Activated CD4-positive, alpha-beta T cell treated with anti-CD3 and anti-CD28 coated beads, Interleukin-2, amount 10 ng/mL, durations not matched to agents 24 days and 14 days (primary cell): ENCODE measurements at regions of chr1 and their contacts with region 1.

Region 1: GRCh38 chr1:168520052-168520751 is 23.6 kb downstream of the XCL2 start:
- DNase-seq: peak; percentile 81
- H3K4me3 Mint-ChIP-seq: peak overlapping the region; percentile 79
- H3K27ac Mint-ChIP-seq: peak overlapping the region; percentile 91
- H3K4me1 Mint-ChIP-seq: peaks cover 51% of the 10 kb centered on the region
- H3K27me3 Mint-ChIP-seq: no peaks in the 10 kb centered on the region

Region 2: GRCh38 chr1:168360151-168361021 is 159.8 kb before region 1 on chr1:
- intact Hi-C with region 1: loop called (anchors 5 kb)
- DNase-seq: peak; percentile 75
- H3K4me3 Mint-ChIP-seq: peak overlapping the region; percentile 3
- H3K27ac Mint-ChIP-seq: peak overlapping the region; percentile 46
- H3K4me1 Mint-ChIP-seq: peaks cover 29% of the 10 kb centered on the region
- H3K27me3 Mint-ChIP-seq: peaks cover 12% of the 10 kb centered on the region

Region 3: DNA sequence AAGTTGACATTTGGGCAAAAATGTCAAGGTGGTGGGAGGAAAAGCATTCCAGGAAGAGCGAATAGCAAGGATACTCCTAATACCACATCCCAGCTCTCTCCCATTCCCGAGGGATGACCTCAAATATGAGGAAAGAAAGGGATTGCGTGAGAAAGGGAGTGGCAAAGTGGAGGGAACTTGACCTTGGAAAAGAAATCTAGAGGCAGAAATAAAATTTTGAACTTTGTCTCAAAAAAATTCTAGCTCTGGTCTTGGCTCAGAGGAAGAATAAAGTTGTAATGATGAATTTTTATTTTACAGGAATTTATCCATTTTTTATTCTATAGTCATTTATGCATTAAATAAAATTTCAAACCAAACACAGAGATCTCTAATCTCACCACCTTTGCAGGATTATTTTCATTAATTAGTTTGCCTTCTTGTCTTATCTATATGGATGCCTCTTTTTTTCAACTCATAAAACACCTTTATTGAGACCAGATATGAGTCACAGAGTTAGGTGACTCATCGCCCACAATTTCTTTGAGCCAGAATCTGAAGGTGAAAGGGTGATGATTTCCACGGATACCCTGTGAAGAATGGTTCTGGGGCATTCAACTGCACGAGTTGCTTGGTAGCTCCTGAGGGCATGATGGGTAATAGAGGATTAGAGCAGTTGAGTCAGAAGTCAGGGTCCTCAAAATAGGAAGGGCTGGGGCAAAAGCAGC is 111.5 kb before region 1 on chr1:
- intact Hi-C with region 1: no loop called
- DNase-seq: peak; percentile 90
- H3K4me3 Mint-ChIP-seq: peak overlapping the region; percentile 53
- H3K27ac Mint-ChIP-seq: peak overlapping the region; percentile 86
- H3K4me1 Mint-ChIP-seq: peaks cover 39% of the 10 kb centered on the region
- H3K27me3 Mint-ChIP-seq: no peaks in the 10 kb centered on the region

Region 4: GRCh38 chr1:168509875-168510791 is 10.1 kb before region 1 on chr1:
- intact Hi-C with region 1: loop called (anchors 1 kb)
- DNase-seq: peak; percentile 74
- H3K4me3 Mint-ChIP-seq: peak overlapping the region; percentile 12
- H3K27ac Mint-ChIP-seq: peak overlapping the region; percentile 80
- H3K4me1 Mint-ChIP-seq: peaks cover 60% of the 10 kb centered on the region
- H3K27me3 Mint-ChIP-seq: no peaks in the 10 kb centered on the region

Region 5: DNA sequence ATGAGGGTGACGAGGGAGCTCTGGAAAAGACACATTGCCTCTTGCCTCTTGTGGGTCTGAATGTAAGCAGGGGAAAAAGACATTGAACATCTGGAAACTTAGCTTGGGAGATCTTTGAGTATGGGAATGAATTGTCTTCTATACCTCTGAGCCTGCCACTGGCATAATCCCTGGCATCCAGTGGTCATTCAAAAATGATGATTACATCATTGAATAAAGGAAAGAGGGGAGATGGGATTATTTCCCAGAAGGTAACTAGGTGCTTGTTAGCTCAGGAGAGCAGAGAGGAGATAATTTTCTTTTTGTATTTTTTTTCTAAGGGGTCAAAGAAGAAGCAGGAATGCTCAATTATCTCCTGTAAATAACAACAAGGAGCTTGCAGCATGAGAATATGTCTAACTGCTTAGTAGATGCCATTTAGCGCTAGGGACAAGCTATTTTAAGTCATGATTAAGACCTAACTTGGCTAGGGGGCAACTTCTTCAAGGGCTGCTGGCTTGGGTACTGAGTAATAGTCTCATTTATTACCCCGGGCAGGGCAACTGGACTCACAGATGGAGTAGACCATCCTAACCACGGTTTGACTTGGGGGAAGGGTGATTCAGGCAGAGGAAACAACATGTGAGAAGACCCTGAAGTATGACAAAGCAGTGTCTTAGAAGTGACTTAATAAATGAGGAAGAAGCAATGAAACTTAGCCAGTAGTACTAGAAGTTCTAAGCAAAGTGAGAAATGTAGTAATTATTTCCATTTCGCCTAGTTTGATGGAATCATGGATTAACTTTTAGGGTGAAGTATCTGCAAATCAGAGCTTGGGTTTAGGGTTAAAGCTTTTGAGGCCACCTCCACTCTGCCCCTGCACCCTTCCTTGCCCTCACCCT is 34.6 kb after region 1 on chr1:
- intact Hi-C with region 1: loop called (anchors 5 kb)
- DNase-seq: no peak
- H3K4me3 Mint-ChIP-seq: no peak overlapping the region
- H3K27ac Mint-ChIP-seq: peak overlapping the region; percentile 27
- H3K4me1 Mint-ChIP-seq: peaks cover 32% of the 10 kb centered on the region
- H3K27me3 Mint-ChIP-seq: peaks cover 3% of the 10 kb centered on the region

Region 6: DNA sequence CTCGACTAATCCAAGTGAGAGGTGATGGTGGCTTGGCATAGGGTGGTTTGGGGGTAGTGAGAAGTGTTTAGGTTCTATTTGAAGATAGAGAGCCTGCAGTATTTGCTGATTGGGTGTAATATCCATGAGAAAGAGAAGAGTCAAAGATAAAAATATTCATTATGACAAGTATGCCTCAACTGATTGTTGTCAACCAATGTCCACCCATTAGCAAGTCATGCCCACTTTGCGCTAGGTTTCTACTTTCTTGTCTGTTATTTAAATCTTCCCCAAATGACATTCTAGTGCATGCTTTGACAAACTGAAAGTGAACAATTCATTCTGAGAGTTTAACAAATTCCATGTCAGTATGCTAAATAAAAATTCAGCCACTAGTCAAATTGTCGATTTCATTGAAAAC is 52.4 kb after region 1 on chr1:
- intact Hi-C with region 1: loop called (anchors 5 kb)
- DNase-seq: no peak
- H3K4me3 Mint-ChIP-seq: no peak overlapping the region
- H3K27ac Mint-ChIP-seq: no peak overlapping the region
- H3K4me1 Mint-ChIP-seq: peaks cover 21% of the 10 kb centered on the region
- H3K27me3 Mint-ChIP-seq: peaks cover 21% of the 10 kb centered on the region

Region 7: GRCh38 chr1:169236143-169236542 is 715.9 kb after region 1 on chr1:
- intact Hi-C with region 1: no loop called
- DNase-seq: no peak
- H3K4me3 Mint-ChIP-seq: no peak overlapping the region
- H3K27ac Mint-ChIP-seq: no peak overlapping the region
- H3K4me1 Mint-ChIP-seq: no peaks in the 10 kb centered on the region
- H3K27me3 Mint-ChIP-seq: no peaks in the 10 kb centered on the region